Activated CD4-positive, alpha-beta memory T cell treated with anti-CD3 and anti-CD28 coated beads for 36 hours (primary cell): ENCODE measurements at regions of chr5 and their contacts with region 1.

Region 1: DNA sequence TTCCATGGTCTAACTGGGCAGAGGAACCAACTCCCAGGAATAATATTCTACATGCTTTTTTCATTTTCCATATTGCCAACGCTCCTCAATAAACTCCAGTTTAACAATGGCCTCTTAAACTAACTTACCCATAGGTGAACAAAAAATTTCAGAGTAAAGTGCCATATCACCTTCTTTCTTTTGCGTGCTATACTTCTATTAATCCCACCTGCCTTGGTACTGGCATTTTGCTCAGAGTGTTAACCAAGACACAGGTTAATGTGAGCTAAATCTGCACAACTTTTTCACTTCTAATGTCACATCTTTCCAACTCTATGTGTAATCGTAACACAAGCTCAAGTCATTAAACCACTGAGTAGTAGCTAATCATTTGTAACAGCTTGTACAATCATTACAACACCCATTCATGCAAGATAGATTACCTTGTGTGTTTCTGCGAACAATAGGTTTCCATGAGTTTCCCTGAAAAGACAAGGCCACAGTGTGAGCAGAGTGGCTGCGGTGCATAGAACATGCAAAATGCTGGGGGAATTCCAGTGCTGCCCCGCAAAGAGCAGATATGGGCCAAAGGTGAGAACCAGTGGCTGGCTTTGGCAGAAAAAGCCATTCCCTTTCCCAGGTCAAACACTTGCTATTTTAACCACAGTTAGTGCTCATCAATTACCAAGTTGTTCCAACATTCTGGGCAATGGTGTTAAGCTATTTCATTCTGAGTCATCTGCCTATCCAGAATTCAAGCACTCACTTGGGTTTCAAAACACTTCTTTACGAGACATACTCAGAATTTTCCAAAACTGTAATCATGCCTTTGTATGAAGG is 42.8 kb downstream of the TIMD4 start:
- DNase-seq: peak; percentile 86
- H3K4me3 Mint-ChIP-seq: peak overlapping the region; percentile 48
- H3K27ac Mint-ChIP-seq: peak overlapping the region; percentile 85
- H3K4me1 Mint-ChIP-seq: peaks cover 43% of the 10 kb centered on the region
- H3K27me3 Mint-ChIP-seq: no peaks in the 10 kb centered on the region

Region 2: DNA sequence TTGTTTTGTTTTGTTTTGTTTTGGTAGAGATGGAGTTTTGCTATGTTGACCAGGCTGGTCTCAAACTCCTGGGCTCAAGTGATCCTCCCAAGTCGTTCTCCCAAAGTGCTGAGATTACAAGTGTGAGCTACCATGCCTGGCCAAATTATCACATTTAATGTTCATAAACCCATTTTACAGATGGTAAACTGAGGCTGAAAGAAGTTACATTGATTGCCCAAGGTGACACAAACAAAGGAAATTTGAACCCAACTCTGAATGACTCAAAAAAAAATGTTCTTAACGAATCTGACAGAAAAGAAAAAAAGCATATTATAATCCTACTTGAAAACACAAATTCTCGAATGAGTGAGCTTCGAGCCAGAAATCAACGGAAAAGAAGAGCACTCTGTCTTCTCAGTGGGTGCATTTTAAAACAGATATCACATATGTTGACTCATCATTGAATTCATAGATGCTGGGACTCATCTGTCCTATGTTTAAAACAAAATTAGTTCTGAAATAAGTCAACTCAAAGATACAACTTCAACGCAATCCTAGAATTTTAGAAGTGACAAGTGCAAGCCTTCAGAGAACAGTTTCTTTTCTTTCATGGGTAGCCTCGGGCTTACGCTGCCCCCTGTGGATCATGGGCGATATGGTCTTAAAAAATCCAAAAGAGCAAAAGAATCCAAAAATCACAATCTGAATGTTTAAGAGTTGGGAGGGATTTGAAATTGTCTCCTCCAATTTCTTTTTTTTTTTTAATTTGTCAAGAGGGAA is 14.4 kb after region 1 on chr5:
- CTCF ChIA-PET with region 1: interaction called, 16 read pairs
- POLR2A ChIA-PET with region 1: interaction called, 8 read pairs
- intact Hi-C with region 1: loop called (anchors 1 kb)
- DNase-seq: peak; percentile 77
- H3K4me3 Mint-ChIP-seq: peak overlapping the region; percentile 8
- H3K27ac Mint-ChIP-seq: peak overlapping the region; percentile 76
- H3K4me1 Mint-ChIP-seq: peaks cover 32% of the 10 kb centered on the region
- H3K27me3 Mint-ChIP-seq: no peaks in the 10 kb centered on the region

Region 3: GRCh38 chr5:157049605-157050004 is 129.4 kb after region 1 on chr5:
- CTCF ChIA-PET with region 1: no interaction called
- POLR2A ChIA-PET with region 1: no interaction called
- intact Hi-C with region 1: no loop called
- DNase-seq: no peak
- H3K4me3 Mint-ChIP-seq: peak overlapping the region; percentile 61
- H3K27ac Mint-ChIP-seq: peak overlapping the region; percentile 74
- H3K4me1 Mint-ChIP-seq: peaks cover 36% of the 10 kb centered on the region
- H3K27me3 Mint-ChIP-seq: no peaks in the 10 kb centered on the region

Region 4: GRCh38 chr5:157100140-157100679 is 180.0 kb after region 1 on chr5:
- CTCF ChIA-PET with region 1: no interaction called
- POLR2A ChIA-PET with region 1: no interaction called
- intact Hi-C with region 1: loop called (anchors 1 kb)
- DNase-seq: peak; percentile 69
- H3K4me3 Mint-ChIP-seq: peak overlapping the region; percentile 27
- H3K27ac Mint-ChIP-seq: peak overlapping the region; percentile 96
- H3K4me1 Mint-ChIP-seq: peaks cover 20% of the 10 kb centered on the region
- H3K27me3 Mint-ChIP-seq: no peaks in the 10 kb centered on the region

Region 5: GRCh38 chr5:157142317-157143126 is 222.3 kb after region 1 on chr5 and contains the start of gene MED7:
- CTCF ChIA-PET with region 1: no interaction called
- POLR2A ChIA-PET with region 1: interaction called, 8 read pairs
- intact Hi-C with region 1: loop called (anchors 2 kb)
- DNase-seq: peak; percentile 96
- H3K4me3 Mint-ChIP-seq: peak within 1 kb of the TSS; percentile 96
- H3K27ac Mint-ChIP-seq: peak within 1 kb of the TSS; percentile 99
- H3K4me1 Mint-ChIP-seq: peaks cover 49% of the 10 kb centered on the region
- H3K27me3 Mint-ChIP-seq: no peaks in the 10 kb centered on the region
- total RNA-seq, gene MED7: 17.2 to 19.2 TPM

Region 6: GRCh38 chr5:157354800-157355199 is 434.5 kb after region 1 on chr5:
- CTCF ChIA-PET with region 1: no interaction called
- POLR2A ChIA-PET with region 1: no interaction called
- intact Hi-C with region 1: loop called (anchors 2 kb)
- DNase-seq: no peak
- H3K4me3 Mint-ChIP-seq: no peak overlapping the region
- H3K27ac Mint-ChIP-seq: no peak overlapping the region
- H3K4me1 Mint-ChIP-seq: peaks cover 53% of the 10 kb centered on the region
- H3K27me3 Mint-ChIP-seq: no peaks in the 10 kb centered on the region

Region 7: DNA sequence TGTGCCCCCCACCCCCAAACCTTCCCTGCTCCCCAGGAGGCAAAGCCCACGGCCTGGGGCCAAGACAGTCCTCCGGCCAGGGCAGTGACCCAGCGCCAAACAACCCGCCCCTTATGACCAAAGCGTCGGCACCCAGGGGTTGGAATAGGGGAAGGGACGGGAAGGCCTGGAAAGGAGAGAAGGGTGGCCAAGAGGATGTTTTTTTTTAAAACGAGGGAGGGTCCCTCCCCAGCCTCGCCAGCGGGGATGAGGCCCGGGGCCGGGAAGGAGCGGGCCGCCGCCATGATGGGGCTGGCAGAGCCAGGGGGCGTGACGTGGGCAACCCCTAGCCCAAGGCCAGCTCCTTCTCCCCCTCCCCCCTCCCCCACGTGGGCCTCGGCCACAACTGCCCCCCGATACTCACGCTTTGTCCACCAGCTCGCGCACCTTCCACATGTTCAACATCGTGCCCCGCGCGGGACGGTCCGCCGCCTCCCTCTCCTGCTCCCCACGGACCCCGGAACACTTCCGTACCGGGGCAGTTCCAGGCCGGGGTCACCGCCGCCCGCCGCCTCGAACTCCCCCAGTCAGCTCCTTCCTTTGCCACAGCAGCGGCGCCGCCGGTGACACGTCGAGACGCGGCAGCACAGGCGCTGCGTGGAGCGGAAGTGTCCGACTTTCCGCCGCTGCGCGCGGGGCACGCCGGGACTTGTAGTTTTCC is 938.4 kb after region 1 on chr5 and contains the start of gene CLINT1:
- CTCF ChIA-PET with region 1: no interaction called
- POLR2A ChIA-PET with region 1: no interaction called
- intact Hi-C with region 1: loop called (anchors 2 kb)
- DNase-seq: peak; percentile 92
- H3K4me3 Mint-ChIP-seq: peak within 1 kb of the TSS; percentile 91
- H3K27ac Mint-ChIP-seq: peak within 1 kb of the TSS; percentile 96
- H3K4me1 Mint-ChIP-seq: peaks cover 73% of the 10 kb centered on the region
- H3K27me3 Mint-ChIP-seq: no peaks in the 10 kb centered on the region
- total RNA-seq, gene CLINT1: 48.7 to 49.4 TPM